Adrenal gland (tissue), 19 donors: ENCODE measurements at regions of chr20 and their contacts with region 1.

Region 1: GRCh38 chr20:53547664-53548239 is 45.9 kb downstream of the ZNF217 start:
- DNase-seq: peak; percentile 34 to 75 (median 52)
- H3K4me3 ChIP-seq: no peak overlapping the region
- H3K27ac ChIP-seq: no peak overlapping the region
- H3K4me1 ChIP-seq: peaks cover 0 to 7% of the 10 kb centered on the region in 2 donors
- H3K27me3 ChIP-seq: no peaks in the 10 kb centered on the region
- CTCF ChIP-seq: peak; percentile 71 to 92 (median 87)
- POLR2A ChIP-seq: no peak

Region 2: GRCh38 chr20:52242237-52243230 is 1305.2 kb before region 1 on chr20:
- intact Hi-C with region 1: loop called in 1 of 2 experiments (anchors 10 kb)
- DNase-seq: no peak
- H3K4me3 ChIP-seq: no peak overlapping the region
- H3K27ac ChIP-seq: no peak overlapping the region
- H3K4me1 ChIP-seq: peaks cover 0 to 4% of the 10 kb centered on the region in 2 donors
- H3K27me3 ChIP-seq: no peaks in the 10 kb centered on the region
- CTCF ChIP-seq: peak; percentile 31 to 81 (median 63)
- POLR2A ChIP-seq: no peak

Region 3: DNA sequence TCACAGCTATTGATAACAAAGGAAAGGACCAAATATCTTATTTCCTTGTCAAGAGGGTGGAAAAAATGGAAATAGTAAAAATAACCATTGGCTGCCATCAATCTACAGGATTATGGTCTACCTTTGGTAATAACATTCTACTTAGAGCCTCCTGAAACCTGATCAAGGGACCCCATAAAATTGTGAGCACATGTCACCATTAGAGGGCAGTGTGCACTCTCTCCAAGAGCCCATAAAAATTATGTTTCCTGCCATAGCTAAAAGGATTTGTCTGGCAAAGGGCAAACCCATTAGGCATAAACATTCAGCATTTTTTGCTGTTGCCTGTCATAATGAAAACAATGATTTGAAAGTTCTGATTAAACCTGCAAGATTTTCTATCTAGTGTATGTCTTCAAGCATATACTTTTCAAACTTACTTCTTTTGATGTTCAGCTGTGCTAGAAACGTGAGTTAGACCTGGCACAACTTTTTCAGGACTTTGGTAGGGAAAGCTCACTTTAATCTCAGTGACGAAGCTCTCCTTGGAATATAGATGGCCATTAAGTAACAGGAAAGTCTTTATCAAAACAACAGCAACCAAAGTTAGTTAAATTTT is 1235.5 kb before region 1 on chr20:
- intact Hi-C with region 1: loop called in 1 of 2 experiments (anchors 10 kb)
- DNase-seq: peak; percentile 32 to 73 (median 52)
- H3K4me3 ChIP-seq: no peak overlapping the region
- H3K27ac ChIP-seq: no peak overlapping the region
- H3K4me1 ChIP-seq: peaks cover 0 to 6% of the 10 kb centered on the region in 2 donors
- H3K27me3 ChIP-seq: no peaks in the 10 kb centered on the region
- CTCF ChIP-seq: peak; percentile 58 to 78 (median 64)
- POLR2A ChIP-seq: no peak

Region 4: DNA sequence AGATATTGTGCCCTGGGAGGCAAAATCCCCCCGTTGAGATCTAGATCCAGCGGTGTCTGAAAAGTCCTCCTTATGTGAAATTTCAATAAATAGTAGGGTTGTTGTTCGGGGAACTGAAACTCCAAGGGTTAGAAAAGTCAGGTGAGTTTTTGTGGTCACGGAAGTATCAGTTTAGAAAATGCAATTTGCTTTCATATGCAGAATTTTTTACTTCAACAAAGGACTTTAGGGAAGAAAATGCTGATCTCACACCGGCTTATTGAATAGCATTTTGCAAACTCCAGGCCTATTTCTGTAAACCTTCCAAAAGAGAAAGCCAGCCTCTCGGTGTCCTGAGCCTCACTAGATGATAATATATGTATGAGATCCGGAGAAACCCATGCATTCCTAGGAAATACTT is 320.9 kb before region 1 on chr20:
- intact Hi-C with region 1: loop called in 1 of 2 experiments (anchors 10 kb)
- DNase-seq: no peak
- H3K4me3 ChIP-seq: no peak overlapping the region
- H3K27ac ChIP-seq: peak overlapping the region in 1 of 5 donors; percentile 13
- H3K4me1 ChIP-seq: peaks cover 0 to 14% of the 10 kb centered on the region in 2 donors
- H3K27me3 ChIP-seq: no peaks in the 10 kb centered on the region
- CTCF ChIP-seq: no peak
- POLR2A ChIP-seq: no peak